CD8-positive, alpha-beta T cell (primary cell): ENCODE measurements at regions of chr2 and their contacts with region 1.

Region 1: GRCh38 chr2:20326163-20326780 is 24.4 kb downstream of the PUM2 start:
- DNase-seq: peak in 8 of 9 experiments; percentile 19 to 71 (median 57)
- ATAC-seq: peak; percentile 84
- H3K4me3 ChIP-seq: no peak overlapping the region
- H3K4me3 Mint-ChIP-seq: no peak overlapping the region
- H3K27ac ChIP-seq: no peak overlapping the region
- H3K27ac Mint-ChIP-seq: peak overlapping the region; percentile 61
- H3K4me1 ChIP-seq: peaks cover 29% of the 10 kb centered on the region
- H3K4me1 Mint-ChIP-seq: peaks cover 76% of the 10 kb centered on the region
- H3K27me3 ChIP-seq: no peaks in the 10 kb centered on the region
- H3K27me3 Mint-ChIP-seq: no peaks in the 10 kb centered on the region
- CTCF ChIP-seq: peak; percentile 61

Region 2: DNA sequence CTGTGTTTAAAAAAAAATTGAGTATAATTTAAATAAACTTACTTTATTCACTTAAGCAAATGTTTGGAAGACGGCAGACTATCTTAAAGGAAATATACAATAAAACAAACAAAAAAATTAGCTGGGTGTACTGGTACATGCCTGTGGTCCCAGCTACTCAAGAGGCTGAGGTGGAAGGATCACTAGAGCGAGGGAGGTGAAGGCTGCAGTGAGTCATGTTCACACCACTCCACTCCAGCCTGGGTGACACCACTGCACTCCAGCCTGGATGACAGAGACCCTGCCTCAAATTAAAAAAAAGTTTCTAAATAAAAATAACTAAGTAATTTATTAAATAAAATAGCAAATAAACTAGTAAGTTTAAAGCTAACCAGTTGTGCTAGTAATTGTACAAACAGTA is 16.9 kb after region 1 on chr2:
- CTCF ChIA-PET with region 1: interaction called, 15 read pairs
- POLR2A ChIA-PET with region 1: interaction called, 3 read pairs
- intact Hi-C with region 1: loop called in 1 of 2 experiments (anchors 2 kb)
- DNase-seq: no peak
- ATAC-seq: peak; percentile 49
- H3K4me3 ChIP-seq: no peak overlapping the region
- H3K4me3 Mint-ChIP-seq: no peak overlapping the region
- H3K27ac ChIP-seq: no peak overlapping the region
- H3K27ac Mint-ChIP-seq: no peak overlapping the region
- H3K4me1 ChIP-seq: peaks cover 80% of the 10 kb centered on the region
- H3K4me1 Mint-ChIP-seq: peaks cover 87% of the 10 kb centered on the region
- H3K27me3 ChIP-seq: no peaks in the 10 kb centered on the region
- H3K27me3 Mint-ChIP-seq: no peaks in the 10 kb centered on the region
- CTCF ChIP-seq: no peak